Testis (tissue), 5 donors: ENCODE measurements at regions of chr12 and their contacts with region 1.

Region 1: DNA sequence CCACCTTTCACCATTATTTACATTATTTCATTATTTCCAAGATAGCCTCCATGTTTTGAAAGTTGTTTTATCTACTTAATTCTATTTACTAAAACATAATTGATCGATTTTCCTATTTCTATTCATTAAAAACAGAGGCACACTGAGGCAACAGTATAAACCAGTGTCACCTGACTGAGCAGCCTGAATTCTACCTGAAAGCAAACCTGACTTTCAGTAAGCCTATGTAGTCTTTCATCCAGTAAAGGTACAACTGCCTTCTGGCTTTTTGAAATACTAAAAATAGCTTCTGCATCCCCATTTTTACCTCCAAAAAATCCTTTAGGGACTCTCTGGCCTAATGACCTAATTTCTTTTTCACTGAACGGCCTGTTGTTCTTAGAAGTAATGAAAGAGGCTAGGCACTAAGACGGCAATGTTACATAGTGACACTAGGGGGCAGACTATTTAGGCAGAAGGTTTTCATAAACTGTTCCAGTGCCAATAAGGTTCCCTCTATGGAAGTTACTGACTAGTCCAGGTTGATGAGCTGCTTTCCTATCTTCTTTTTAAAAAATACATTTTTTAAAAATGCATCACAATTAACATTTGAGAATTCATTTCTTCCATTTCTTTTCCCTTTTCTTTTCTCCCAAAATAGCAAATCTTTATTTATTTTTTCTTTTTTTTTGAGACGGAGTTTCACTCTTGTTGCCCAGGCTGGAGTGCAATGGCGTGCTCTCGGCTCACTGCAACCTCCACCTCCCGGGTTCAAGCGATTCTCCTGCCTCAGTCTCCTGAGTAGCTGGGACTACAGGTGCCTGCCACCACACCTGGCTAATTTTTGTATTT is 17.5 kb downstream of the ANAPC5 start:
- DNase-seq: peak; percentile 43
- H3K4me3 ChIP-seq: no peak overlapping the region
- H3K27ac ChIP-seq: no peak overlapping the region
- H3K4me1 ChIP-seq: peaks cover 2% of the 10 kb centered on the region
- H3K27me3 ChIP-seq: no peaks in the 10 kb centered on the region
- CTCF ChIP-seq: peak; percentile 69 to 93 (median 81)
- POLR2A ChIP-seq: no peak

Region 2: GRCh38 chr12:120955232-120955631 is 379.5 kb before region 1 on chr12:
- intact Hi-C with region 1: no loop called
- DNase-seq: no peak
- H3K4me3 ChIP-seq: no peak overlapping the region
- H3K27ac ChIP-seq: no peak overlapping the region
- H3K4me1 ChIP-seq: no peaks in the 10 kb centered on the region
- H3K27me3 ChIP-seq: no peaks in the 10 kb centered on the region
- CTCF ChIP-seq: no peak
- POLR2A ChIP-seq: no peak

Region 3: DNA sequence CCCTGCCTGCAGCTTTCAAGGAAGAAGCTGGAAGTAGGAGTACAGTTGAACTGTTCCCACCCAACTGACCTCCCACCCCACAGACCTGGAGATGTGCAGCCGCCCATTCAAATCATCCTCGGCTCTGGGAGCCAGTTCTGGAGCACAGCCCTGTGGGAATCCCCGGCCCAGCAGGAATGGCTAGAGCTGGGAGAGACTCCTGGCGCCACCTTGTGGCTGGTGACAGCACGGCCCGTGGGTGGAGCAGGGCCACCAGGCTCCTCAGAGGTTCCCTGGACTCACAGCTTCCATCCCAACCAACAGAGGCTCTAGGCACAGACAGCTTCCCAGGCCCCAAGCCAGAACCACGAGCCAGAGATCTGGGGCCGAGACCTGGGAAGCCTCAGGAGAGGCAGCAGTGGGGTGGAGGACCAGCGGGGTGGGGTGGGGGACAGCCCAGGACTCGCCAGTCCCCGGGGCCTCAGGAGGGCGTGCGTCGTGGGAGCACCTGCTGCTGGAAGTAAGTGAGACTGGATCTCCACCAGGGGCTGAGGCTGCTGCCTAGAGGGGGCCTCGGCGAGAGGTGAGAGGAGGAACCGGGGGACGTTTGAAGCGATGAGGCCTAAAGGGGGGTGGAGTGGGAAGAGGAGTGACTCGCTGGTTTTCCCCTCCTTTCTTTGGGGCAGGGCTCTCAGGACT is 108.6 kb after region 1 on chr12:
- intact Hi-C with region 1: loop called (anchors 5 kb)
- DNase-seq: peak; percentile 93
- H3K4me3 ChIP-seq: no peak overlapping the region
- H3K27ac ChIP-seq: no peak overlapping the region
- H3K4me1 ChIP-seq: peaks cover 5% of the 10 kb centered on the region
- H3K27me3 ChIP-seq: no peaks in the 10 kb centered on the region
- CTCF ChIP-seq: peak; percentile 73 to 80 (median 79)
- POLR2A ChIP-seq: no peak